Gastrocnemius medialis (tissue), 4 donors: ENCODE measurements at regions of chr17 and their contacts with region 1.

Region 1: GRCh38 chr17:1783834-1784611 is 22.2 kb downstream of the SERPINF1 start:
- DNase-seq: peak; percentile 98 to 99
- ATAC-seq: peak; percentile 80 to 84
- H3K4me3 ChIP-seq: peak overlapping the region; percentile 33 to 43 (median 40)
- H3K27ac ChIP-seq: peak overlapping the region; percentile 97 to 100 (median 98)
- H3K4me1 ChIP-seq: peaks cover 68 to 76% of the 10 kb centered on the region in 2 donors
- H3K27me3 ChIP-seq: no peaks in the 10 kb centered on the region
- CTCF ChIP-seq: peak; percentile 83 to 96 (median 92)
- POLR2A ChIP-seq: peak; percentile 87 to 94

Region 2: DNA sequence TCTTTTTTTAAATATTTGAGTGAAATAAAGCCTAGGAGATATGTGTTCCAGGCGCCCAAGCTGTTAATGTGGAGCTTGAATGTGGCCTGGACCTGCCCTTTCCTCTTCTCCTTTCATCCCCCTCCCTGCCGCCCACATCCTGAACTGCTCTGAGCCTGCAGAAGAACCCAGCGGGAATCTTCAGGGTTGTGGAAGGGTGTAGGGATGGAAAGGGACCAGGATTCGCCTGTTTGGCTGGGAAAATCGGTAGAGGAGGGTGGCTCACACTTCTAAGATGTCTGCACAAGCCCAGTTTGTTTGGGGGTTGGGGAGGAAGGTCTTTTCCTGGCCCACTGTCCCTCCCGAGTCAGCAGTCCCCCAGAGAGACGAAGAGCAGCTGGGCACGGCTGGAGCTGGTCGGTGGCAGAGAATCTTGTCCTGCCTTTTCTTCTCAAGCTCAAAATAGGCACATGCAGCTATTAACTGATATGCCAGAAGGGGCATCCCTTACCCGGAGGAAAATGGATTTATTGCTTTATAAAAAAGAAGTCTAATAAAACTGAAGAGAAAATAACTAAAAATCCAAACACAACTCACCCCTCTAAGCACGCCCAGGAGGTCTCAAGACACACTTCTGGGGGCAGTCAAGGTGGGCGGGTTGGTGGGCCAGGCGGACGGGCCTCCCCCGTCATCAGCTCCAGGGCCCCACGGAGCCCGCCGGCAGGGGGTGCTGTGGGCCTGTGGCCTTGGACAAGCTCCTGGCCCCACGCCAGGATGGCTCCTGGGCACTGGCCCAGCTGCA is 209.9 kb before region 1 on chr17:
- in situ Hi-C with region 1: no loop called
- intact Hi-C with region 1: loop called (anchors 10 kb)
- DNase-seq: peak; percentile 59 to 74
- ATAC-seq: peak; percentile 46 to 54
- H3K4me3 ChIP-seq: no peak overlapping the region
- H3K27ac ChIP-seq: peak overlapping the region; percentile 90 to 97 (median 95)
- H3K4me1 ChIP-seq: peaks cover 40 to 44% of the 10 kb centered on the region in 2 donors
- H3K27me3 ChIP-seq: no peaks in the 10 kb centered on the region
- CTCF ChIP-seq: peak; percentile 97 to 99 (median 99)
- POLR2A ChIP-seq: no peak

Region 3: DNA sequence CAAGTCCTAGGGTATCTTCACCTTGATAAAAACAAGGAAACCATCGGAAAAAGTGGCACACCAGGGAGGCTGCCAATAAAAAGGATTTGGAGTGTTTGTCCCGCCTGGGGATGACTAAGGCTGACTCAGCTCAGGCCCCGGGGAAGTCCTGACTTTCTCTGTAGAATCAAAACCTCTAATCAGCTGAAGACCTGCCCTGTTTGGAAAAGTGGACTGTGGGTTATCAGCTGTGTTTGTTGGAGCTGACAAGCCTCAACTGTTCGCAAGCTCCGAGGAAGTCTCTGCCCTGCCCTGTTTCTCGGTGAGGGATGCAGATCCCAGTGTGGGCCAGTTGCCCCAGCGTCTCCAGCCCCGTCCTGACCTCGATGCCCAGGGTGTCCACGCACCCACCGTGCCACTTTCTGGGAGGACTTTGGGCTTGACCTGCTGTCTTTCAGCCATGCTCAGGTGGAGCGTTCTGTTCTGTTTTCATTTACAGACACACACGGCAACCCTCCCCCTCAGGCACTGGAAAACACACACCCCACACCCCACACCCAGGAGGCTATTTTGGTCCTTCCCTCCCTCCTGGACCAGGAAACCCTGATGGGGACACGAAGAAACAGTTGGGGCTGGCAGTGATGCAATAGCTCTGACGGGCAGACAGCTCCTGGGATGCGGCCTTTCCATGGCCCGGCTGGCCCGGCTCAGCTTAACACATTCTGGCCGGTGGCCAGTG is 193.8 kb before region 1 on chr17:
- in situ Hi-C with region 1: no loop called
- intact Hi-C with region 1: no loop called
- DNase-seq: peak; percentile 95 to 98
- ATAC-seq: peak; percentile 79 to 84
- H3K4me3 ChIP-seq: peak overlapping the region in 3 of 4 donors; percentile 14 to 30 (median 18)
- H3K27ac ChIP-seq: peak overlapping the region; percentile 91 to 98 (median 96)
- H3K4me1 ChIP-seq: peaks cover 78% of the 10 kb centered on the region in 2 donors
- H3K27me3 ChIP-seq: no peaks in the 10 kb centered on the region
- CTCF ChIP-seq: peak in 1 of 5 experiments; percentile 12
- POLR2A ChIP-seq: peak; percentile 58 to 64

Region 4: DNA sequence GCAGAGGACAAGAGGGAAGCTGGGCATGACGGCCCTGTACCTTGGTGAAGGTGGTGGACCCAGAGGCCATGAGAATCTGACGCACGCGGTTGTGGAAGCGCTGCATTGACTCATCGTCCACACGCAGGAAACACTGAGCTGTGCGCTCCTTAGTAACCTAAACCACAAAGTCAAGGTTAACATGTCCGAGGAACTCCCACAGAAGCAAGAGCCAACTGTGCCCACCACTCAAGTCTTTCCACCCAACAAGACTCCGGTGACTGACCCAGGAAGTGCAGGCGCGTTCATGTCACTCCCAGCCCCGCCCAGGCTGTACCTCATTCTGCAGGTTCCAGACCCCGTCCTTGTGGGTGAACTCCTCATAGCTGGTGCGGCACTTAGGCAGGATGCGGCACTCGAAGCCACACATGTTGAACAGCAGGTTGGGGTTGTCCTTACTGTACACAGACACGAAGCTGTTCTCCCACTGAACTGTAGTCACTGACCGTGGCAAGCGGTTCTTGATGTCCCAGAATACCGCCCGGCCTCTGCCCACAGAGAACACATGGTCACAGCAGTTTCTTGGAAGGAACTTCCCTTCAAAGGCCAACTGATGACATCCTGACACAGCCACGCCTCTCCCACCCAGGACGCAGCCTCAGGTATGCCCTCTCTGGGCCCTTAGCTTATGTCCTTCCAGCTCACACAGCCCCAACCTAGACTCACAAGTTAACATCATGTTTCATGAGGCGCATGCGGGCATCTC is 110.8 kb before region 1 on chr17:
- in situ Hi-C with region 1: loop called in 2 of 4 experiments (anchors 5 to 25 kb)
- intact Hi-C with region 1: loop called (anchors 1 kb)
- DNase-seq: peak in 1 of 2 donors; percentile 25
- ATAC-seq: no peak
- H3K4me3 ChIP-seq: no peak overlapping the region
- H3K27ac ChIP-seq: peak overlapping the region; percentile 8 to 91 (median 38)
- H3K4me1 ChIP-seq: peaks cover 13 to 25% of the 10 kb centered on the region in 2 donors
- H3K27me3 ChIP-seq: no peaks in the 10 kb centered on the region
- CTCF ChIP-seq: no peak
- POLR2A ChIP-seq: no peak

Region 5: GRCh38 chr17:1724506-1725362 is 59.3 kb before region 1 on chr17 and contains the start of gene WDR81:
- in situ Hi-C with region 1: loop called (anchors 5 to 10 kb)
- intact Hi-C with region 1: loop called (anchors 1 kb)
- DNase-seq: peak; percentile 91 to 93
- ATAC-seq: peak; percentile 71 to 78
- H3K4me3 ChIP-seq: peak within 1 kb of the TSS; percentile 62 to 88 (median 76)
- H3K27ac ChIP-seq: peak within 1 kb of the TSS; percentile 95 to 100 (median 99)
- H3K4me1 ChIP-seq: peaks cover 47 to 50% of the 10 kb centered on the region in 2 donors
- H3K27me3 ChIP-seq: no peaks in the 10 kb centered on the region
- CTCF ChIP-seq: peak in 4 of 5 experiments; percentile 6 to 61 (median 26)
- POLR2A ChIP-seq: peak; percentile 82 to 92
- total RNA-seq, gene WDR81: 22.3 to 61.1 (median 42.7) TPM

Region 6: GRCh38 chr17:1736348-1737281 is 47.4 kb before region 1 on chr17:
- in situ Hi-C with region 1: no loop called
- intact Hi-C with region 1: no loop called
- DNase-seq: peak in 1 of 2 donors; percentile 54
- ATAC-seq: peak; percentile 32 to 43
- H3K4me3 ChIP-seq: no peak overlapping the region
- H3K27ac ChIP-seq: peak overlapping the region; percentile 5 to 46 (median 8)
- H3K4me1 ChIP-seq: peaks cover 10 to 16% of the 10 kb centered on the region in 2 donors
- H3K27me3 ChIP-seq: no peaks in the 10 kb centered on the region
- CTCF ChIP-seq: no peak
- POLR2A ChIP-seq: no peak

Region 7: DNA sequence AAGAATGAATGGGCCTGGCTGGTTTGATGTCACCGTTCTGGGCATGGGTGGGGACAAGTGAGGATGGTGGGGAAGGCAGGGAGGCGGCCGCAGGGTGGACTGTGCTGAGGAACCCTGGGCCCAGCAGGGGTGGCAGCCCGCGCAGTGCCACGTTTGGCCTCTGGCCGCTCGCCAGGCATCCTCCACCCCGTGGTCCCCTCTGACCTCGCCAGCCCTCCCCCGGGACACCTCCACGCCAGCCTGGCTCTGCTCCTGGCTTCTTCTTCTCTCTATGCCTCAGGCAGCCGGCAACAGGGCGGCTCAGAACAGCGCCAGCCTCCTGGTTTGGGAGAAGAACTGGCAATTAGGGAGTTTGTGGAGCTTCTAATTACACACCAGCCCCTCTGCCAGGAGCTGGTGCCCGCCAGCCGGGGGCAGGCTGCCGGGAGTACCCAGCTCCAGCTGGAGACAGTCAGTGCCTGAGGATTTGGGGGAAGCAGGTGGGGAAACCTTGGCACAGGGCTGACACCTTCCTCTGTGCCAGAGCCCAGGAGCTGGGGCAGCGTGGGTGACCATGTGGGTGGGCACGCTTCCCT is 28.7 kb before region 1 on chr17:
- in situ Hi-C with region 1: no loop called
- intact Hi-C with region 1: no loop called
- DNase-seq: peak in 1 of 2 donors; percentile 20
- ATAC-seq: peak; percentile 13 to 22
- H3K4me3 ChIP-seq: no peak overlapping the region
- H3K27ac ChIP-seq: peak overlapping the region; percentile 37 to 77 (median 64)
- H3K4me1 ChIP-seq: peaks cover 13 to 16% of the 10 kb centered on the region in 2 donors
- H3K27me3 ChIP-seq: no peaks in the 10 kb centered on the region
- CTCF ChIP-seq: no peak
- POLR2A ChIP-seq: no peak

Region 8: DNA sequence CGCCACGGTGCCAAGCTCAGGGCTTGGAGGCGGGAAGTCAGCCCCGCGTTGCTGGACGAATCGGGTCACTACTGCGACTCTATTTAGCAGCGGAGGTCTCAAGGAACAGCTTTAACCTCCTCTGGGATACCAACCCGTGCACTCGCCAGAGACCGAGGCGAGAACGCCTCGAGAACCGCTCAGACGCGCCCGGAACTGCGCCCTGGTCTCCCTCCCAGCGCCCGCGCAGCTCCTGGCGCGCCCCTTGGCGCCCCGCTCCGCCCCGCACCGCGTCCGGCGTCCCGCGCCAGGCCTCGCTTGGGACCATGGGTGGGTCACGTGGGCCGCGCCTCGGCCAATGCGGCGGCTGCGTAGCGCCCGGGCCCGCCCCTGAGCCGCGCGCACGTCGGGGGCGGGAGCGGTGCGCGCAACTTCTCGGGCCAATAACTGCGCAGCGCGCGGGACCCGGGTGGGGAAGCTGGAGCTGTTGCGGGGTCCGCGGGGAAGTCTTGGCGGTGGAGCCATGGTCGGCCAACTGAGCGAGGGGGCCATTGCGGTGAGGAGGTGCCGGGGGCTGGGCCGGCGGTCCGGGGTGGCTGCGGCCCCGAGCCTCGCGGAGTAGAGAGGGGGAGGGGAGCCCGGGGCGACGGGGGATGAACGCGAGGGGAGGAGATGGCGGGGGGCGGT is 45.7 kb after region 1 on chr17 and contains the starts of genes RPA1 and SMYD4:
- in situ Hi-C with region 1: no loop called
- intact Hi-C with region 1: loop called (anchors 5 kb)
- DNase-seq: peak; percentile 81 to 88
- ATAC-seq: peak; percentile 87 to 90
- H3K4me3 ChIP-seq: peak within 1 kb of the TSS; percentile 82 to 93 (median 92)
- H3K27ac ChIP-seq: peak within 1 kb of the TSS; percentile 95 to 98 (median 96)
- H3K4me1 ChIP-seq: peaks cover 13 to 15% of the 10 kb centered on the region in 2 donors
- H3K27me3 ChIP-seq: no peaks in the 10 kb centered on the region
- CTCF ChIP-seq: peak in 1 of 5 experiments; percentile 48
- POLR2A ChIP-seq: peak; percentile 99 to 100
- total RNA-seq, gene RPA1: 26.5 to 46.8 (median 34.9) TPM
- total RNA-seq, gene SMYD4: 15.1 to 18.1 (median 16.7) TPM